GM10248 (cell line): ENCODE measurements at regions of chr20 and their contacts with region 1.

Region 1: DNA sequence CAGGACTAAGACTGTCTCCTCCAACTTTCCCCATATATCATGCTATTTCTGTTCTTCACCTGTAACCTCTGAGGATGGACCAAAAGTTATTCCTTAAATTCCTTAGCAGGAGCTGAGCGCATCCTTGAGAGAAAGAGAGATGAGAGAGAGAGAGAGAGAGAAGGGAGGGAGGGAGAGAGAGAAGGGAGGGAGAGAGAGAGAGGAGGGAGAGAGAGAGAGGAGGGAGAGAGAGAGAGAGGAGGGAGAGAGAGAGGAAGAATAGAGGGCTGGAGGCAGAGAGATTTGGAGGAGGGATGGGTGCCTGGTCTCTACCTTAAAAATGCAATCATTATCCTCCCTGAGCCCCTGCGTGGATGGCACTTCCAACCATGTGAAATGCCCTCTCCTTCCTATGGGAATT is 73.6 kb downstream of the BMP2 start:
- DNase-seq: no peak
- CTCF ChIP-seq: no peak

Region 2: DNA sequence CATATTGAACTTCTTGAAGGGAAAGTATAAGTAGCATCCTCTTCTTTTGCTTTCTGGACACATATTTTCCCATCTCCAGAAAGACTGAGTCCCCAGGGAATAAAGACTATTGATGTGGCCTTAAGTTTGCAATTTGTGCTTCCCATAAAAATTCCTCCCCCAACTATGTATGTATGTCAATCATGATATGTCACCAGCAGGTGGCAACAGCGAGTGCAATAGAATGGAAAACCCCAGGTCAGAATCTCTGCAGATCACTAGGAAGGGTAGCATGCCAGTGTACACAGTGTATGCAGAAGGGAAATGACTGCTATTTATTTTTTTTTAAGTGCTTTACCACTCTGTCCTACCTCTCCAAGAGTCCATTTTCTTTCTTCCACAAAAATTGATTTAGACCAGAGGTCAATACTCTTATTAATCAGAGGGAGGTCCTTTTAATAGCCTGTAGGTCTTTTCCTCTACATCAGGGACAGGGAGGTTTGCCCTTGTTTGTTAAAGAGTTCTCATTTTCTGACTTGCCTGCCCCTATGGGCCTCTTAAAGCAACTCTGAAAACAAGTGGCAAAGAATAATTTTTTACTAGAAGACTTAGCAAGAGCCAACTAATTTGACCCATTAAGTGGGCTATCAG is 12.2 kb before region 1 on chr20:
- CTCF ChIA-PET with region 1: interaction called, 13 read pairs
- POLR2A ChIA-PET with region 1: no interaction called
- DNase-seq: peak; percentile 39
- CTCF ChIP-seq: peak; percentile 70